Activated CD4-positive, alpha-beta T cell treated with anti-CD3 and anti-CD28 coated beads for 36 hours (primary cell): ENCODE measurements at regions of chr17 and their contacts with region 1.

Region 1: DNA sequence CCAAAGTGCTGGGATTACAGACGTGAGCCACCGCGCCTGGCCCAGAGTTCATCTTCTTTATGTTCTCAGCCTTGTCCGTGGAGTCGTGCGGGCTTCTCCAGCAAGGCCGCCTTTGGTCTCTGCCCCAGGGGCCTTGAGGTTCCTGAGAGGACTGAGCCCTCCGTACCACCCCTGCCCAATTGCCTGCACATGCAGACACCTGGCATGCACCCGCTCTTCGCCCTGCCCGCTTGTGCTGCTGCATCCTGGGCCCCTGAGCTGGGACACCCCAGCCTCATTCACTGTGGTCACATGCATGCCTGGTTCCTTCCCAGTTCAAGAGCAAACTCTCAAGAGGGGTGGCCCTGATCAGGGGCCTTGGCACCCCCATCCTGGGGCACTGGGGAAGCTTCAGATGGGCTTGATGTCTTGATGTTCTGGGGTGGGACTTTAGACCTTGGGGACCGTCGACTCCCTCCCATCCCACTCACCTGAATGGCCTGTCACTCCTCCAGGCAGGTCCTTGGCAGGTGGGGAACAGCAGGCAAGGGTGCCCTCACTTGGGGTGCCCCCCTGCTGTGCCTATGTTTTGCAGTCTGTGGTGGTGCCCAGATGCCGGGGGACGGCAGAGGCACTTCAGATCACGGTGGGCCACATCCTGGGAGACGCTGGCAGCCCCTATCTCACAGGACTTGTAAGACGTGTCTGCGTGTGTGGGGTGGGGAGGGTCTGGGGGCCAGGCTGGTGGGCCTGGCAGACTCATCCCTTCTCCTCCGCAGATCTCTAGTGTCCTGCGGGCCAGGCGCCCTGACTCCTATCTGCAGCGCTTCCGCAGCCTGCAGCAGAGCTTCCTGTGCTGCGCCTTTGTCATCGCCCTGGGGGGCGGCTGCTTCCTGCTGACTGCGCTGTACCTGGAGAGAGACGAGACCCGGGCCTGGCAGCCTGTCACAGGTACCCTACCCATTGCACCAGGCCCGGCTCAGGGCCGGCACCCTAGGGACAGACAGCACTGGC is 12.7 kb upstream of the SPNS2 start:
- DNase-seq: peak; percentile 76
- ATAC-seq: peak; percentile 96
- H3K4me3 Mint-ChIP-seq: peak overlapping the region; percentile 87
- H3K27ac Mint-ChIP-seq: peak overlapping the region; percentile 92
- H3K4me1 Mint-ChIP-seq: peaks cover 44% of the 10 kb centered on the region
- H3K27me3 Mint-ChIP-seq: no peaks in the 10 kb centered on the region

Region 2: GRCh38 chr17:4891411-4892342 is 405.7 kb after region 1 on chr17:
- CTCF ChIA-PET with region 1: no interaction called
- POLR2A ChIA-PET with region 1: no interaction called
- intact Hi-C with region 1: loop called in 1 of 2 experiments (anchors 5 kb)
- DNase-seq: no peak
- ATAC-seq: no peak
- H3K4me3 Mint-ChIP-seq: no peak overlapping the region
- H3K27ac Mint-ChIP-seq: no peak overlapping the region
- H3K4me1 Mint-ChIP-seq: no peaks in the 10 kb centered on the region
- H3K27me3 Mint-ChIP-seq: no peaks in the 10 kb centered on the region